ENCODE measurements at regions of chr13 and their contacts with region 1.

Region 1: GRCh38 chr13:41668130-41668757 is 210.9 kb downstream of the RGCC start:
- DNase-seq: peak; percentile 86
- ATAC-seq: peak; percentile 98
- H3K4me3 ChIP-seq: no peak overlapping the region
- H3K27ac ChIP-seq: no peak overlapping the region
- H3K4me1 ChIP-seq: peaks cover 4 to 9% of the 10 kb centered on the region in 2 experiments; a peak in 3 of 4 replicates
- H3K27me3 ChIP-seq: no peaks in the 10 kb centered on the region
- CTCF ChIP-seq: peak; percentile 62 to 82 (median 70)
- POLR2A ChIP-seq: no peak
- RAD21 ChIP-seq: peak; percentile 90

Region 2: DNA sequence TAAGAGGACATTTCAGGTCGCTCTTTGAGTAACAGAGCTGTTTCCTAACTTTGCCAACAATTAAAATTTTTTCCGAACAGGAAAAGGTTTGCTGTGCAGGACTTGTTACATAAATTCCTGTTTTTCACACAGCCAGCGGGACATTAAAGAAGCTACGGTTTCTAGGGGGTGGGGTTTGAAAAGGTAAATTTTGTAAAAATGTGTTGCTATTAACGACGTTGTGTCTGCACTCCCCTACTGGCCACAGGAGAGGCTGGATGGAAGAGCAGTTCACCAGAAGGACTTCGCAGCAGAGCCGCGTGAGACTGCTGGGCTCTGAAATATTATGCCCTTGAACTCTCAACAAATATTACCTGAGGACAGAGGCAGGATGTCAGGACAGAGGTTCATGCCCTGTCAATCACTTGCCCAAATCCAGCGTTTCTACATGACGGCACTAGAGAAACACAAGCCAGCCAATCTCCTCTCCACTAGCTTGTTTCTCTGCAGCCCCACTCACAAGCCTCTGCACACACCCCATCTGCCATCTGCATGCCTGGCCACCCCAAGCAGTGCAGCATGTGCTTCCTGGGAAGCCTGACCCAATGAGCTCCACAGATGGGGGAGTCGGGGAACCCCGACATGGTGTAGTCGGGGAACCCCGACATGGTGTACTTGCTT is 1103.8 kb before region 1 on chr13:
- CTCF ChIA-PET with region 1: no interaction called
- POLR2A ChIA-PET with region 1: no interaction called
- RAD21 ChIA-PET with region 1: no interaction called
- intact Hi-C with region 1: no loop called
- DNase-seq: no peak
- ATAC-seq: no peak
- H3K4me3 ChIP-seq: no peak overlapping the region
- H3K27ac ChIP-seq: no peak overlapping the region
- H3K4me1 ChIP-seq: no peaks in the 10 kb centered on the region
- H3K27me3 ChIP-seq: no peaks in the 10 kb centered on the region
- CTCF ChIP-seq: no peak
- POLR2A ChIP-seq: no peak
- RAD21 ChIP-seq: no peak

Region 3: DNA sequence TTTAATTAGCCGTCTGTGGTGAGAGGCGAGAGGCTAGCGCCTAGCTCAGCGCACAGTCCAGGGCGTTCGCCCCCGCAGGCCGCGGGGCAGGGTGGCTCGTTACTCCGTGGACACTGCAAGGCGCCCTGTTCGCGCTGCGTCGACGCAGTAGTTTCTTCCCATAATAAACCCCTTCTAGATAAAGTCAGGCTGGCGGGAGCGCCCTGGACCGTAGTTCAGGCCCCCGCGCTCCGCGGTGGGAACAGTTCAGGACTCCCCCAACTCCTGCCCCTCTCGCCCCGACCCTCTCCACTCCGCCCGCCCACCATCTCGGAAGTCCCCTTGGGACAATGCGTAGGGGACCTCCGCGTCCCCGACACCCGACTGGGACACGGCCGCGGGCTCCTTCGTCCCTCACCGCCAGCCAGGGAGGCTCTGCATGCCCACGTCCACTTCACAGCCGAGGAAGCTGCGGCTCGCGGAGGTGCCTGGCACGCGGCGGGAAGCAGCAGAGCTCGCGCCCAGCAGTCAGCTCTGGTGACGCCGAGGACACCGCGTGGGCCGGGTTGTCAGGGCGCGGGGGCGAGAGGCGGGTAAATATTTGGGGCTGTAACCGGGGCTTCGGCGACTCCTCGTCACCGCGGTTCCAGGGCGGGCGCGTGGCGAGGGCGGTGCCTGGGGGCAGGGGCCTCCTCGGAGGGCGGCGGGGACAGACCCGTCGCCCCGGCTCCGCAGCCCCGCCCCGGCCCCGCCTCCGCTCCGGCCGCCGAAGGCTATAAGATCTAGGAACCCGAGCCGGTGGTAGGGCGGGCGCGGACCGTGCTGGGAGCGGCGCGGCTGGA is 211.3 kb before region 1 on chr13 and contains the start of gene RGCC:
- CTCF ChIA-PET with region 1: no interaction called
- POLR2A ChIA-PET with region 1: no interaction called
- RAD21 ChIA-PET with region 1: no interaction called
- intact Hi-C with region 1: no loop called
- DNase-seq: peak; percentile 10
- ATAC-seq: peak; percentile 82
- H3K4me3 ChIP-seq: peak within 1 kb of the TSS; percentile 47 to 62
- H3K27ac ChIP-seq: peak within 1 kb of the TSS; percentile 19; the same call in 1 of the 2 replicates
- H3K4me1 ChIP-seq: peaks cover 11 to 25% of the 10 kb centered on the region in 2 experiments
- H3K27me3 ChIP-seq: no peaks in the 10 kb centered on the region
- CTCF ChIP-seq: no peak
- POLR2A ChIP-seq: no peak
- RAD21 ChIP-seq: no peak
- total RNA-seq, gene RGCC: 3.2 TPM

Region 4: DNA sequence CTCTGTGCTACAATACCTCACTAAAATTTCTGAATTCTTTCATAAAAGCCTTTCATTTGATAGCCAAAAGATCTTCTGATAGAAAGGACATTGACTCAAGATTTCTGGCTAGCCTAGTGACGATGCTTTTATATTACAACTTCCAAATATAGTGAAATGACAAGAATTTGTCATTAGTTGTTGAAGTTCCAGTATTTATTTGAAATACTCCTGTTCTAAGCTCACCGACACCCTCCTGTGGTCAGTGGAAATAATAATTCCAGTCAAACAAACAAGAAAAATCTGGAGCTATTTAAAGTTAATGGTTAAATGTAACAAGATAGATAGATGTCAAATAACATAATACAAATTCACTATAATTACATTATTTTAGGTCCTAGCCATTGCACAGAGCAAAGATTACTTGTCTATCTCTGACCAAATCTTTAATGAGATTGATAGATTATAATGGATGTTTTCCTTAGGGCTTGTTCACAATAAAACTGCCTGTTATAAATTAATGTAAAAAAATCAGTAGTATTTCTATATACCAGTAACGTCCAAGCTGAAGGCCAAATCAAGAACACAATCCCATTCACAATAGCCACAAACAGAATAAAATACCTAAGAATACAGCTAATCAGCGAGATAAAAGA is 15.4 kb before region 1 on chr13:
- CTCF ChIA-PET with region 1: interaction called, 17 read pairs
- POLR2A ChIA-PET with region 1: interaction called, 7 read pairs
- RAD21 ChIA-PET with region 1: no interaction called
- intact Hi-C with region 1: no loop called
- DNase-seq: peak; percentile 23
- ATAC-seq: no peak
- H3K4me3 ChIP-seq: no peak overlapping the region
- H3K27ac ChIP-seq: no peak overlapping the region
- H3K4me1 ChIP-seq: peaks cover 26 to 30% of the 10 kb centered on the region in 2 experiments
- H3K27me3 ChIP-seq: no peaks in the 10 kb centered on the region
- CTCF ChIP-seq: peak; percentile 27 to 71 (median 66); a peak in 4 of 6 replicates
- POLR2A ChIP-seq: no peak
- RAD21 ChIP-seq: peak; percentile 78

Region 5: GRCh38 chr13:41678249-41678648 is 10.0 kb after region 1 on chr13:
- CTCF ChIA-PET with region 1: interaction called, 20 read pairs
- POLR2A ChIA-PET with region 1: no interaction called
- RAD21 ChIA-PET with region 1: no interaction called
- intact Hi-C with region 1: no loop called
- DNase-seq: no peak
- ATAC-seq: no peak
- H3K4me3 ChIP-seq: no peak overlapping the region
- H3K27ac ChIP-seq: no peak overlapping the region
- H3K4me1 ChIP-seq: no peaks in the 10 kb centered on the region
- H3K27me3 ChIP-seq: no peaks in the 10 kb centered on the region
- CTCF ChIP-seq: no peak
- POLR2A ChIP-seq: no peak
- RAD21 ChIP-seq: no peak

Region 6: GRCh38 chr13:41740479-41740878 is 72.2 kb after region 1 on chr13:
- CTCF ChIA-PET with region 1: no interaction called
- POLR2A ChIA-PET with region 1: no interaction called
- RAD21 ChIA-PET with region 1: no interaction called
- intact Hi-C with region 1: no loop called
- DNase-seq: no peak
- ATAC-seq: no peak
- H3K4me3 ChIP-seq: no peak overlapping the region
- H3K27ac ChIP-seq: no peak overlapping the region
- H3K4me1 ChIP-seq: no peaks in the 10 kb centered on the region
- H3K27me3 ChIP-seq: no peaks in the 10 kb centered on the region
- CTCF ChIP-seq: no peak
- POLR2A ChIP-seq: no peak
- RAD21 ChIP-seq: no peak

Region 7: DNA sequence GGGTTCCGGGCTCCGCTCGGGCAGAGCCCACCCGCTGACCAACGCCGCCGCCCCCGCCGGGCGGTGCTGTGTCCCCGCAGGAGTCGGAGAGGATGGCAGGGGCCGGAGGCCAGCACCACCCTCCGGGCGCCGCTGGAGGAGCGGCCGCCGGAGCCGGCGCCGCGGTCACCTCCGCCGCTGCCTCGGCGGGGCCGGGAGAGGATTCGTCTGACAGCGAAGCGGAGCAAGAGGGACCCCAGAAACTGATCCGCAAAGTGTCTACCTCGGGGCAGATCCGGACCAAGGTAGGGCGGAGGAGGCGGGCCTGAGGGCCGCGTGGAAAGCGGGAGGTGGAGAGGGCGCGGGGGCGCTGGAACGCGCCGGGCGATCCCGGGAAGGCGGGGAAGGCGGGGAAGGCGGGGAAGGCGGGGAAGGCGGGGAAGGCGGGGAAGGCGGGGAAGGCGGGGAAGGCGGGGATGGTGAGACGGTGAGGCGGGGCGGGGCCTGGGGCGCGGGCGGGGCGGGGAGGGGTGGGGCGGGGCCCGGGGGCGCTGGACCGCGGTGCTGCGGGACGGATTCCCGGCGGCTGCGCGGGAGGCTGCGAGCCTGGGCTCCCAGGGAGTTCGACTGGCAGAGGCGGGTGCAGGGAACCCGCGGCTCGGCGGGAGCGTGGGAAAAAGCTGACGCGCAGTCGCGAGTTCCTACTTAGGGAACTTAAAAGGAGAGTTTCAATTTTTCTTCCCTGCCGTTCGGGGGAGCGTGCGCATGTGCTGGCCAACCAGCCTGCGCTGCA is 380.6 kb after region 1 on chr13:
- CTCF ChIA-PET with region 1: no interaction called
- POLR2A ChIA-PET with region 1: no interaction called
- RAD21 ChIA-PET with region 1: no interaction called
- intact Hi-C with region 1: loop called (anchors 5 kb)
- DNase-seq: peak; percentile 33
- ATAC-seq: peak; percentile 76
- H3K4me3 ChIP-seq: peak overlapping the region; percentile 69 to 83
- H3K27ac ChIP-seq: peak overlapping the region; percentile 85
- H3K4me1 ChIP-seq: peaks cover 10 to 17% of the 10 kb centered on the region in 2 experiments
- H3K27me3 ChIP-seq: no peaks in the 10 kb centered on the region
- CTCF ChIP-seq: 0 out of 6 replicates have a peak, but pooled peaks of 1 of the 3 experiments have one; percentile 7
- POLR2A ChIP-seq: peak; percentile 64
- RAD21 ChIP-seq: no peak

Region 8: GRCh38 chr13:42215578-42216421 is 547.6 kb after region 1 on chr13:
- CTCF ChIA-PET with region 1: no interaction called
- POLR2A ChIA-PET with region 1: no interaction called
- RAD21 ChIA-PET with region 1: no interaction called
- intact Hi-C with region 1: loop called (anchors 2 kb)
- DNase-seq: peak; percentile 29
- ATAC-seq: peak; percentile 84
- H3K4me3 ChIP-seq: no peak overlapping the region
- H3K27ac ChIP-seq: no peak overlapping the region
- H3K4me1 ChIP-seq: peaks cover 0 to 9% of the 10 kb centered on the region in 2 experiments; a peak in 3 of 4 replicates
- H3K27me3 ChIP-seq: no peaks in the 10 kb centered on the region
- CTCF ChIP-seq: peak; percentile 33 to 73 (median 68); a peak in 5 of 6 replicates
- POLR2A ChIP-seq: no peak
- RAD21 ChIP-seq: peak; percentile 68

Measured in HCT116 (cell line).